ENCODE measurements at regions of chr12 and their contacts with region 1.

Region 1: DNA sequence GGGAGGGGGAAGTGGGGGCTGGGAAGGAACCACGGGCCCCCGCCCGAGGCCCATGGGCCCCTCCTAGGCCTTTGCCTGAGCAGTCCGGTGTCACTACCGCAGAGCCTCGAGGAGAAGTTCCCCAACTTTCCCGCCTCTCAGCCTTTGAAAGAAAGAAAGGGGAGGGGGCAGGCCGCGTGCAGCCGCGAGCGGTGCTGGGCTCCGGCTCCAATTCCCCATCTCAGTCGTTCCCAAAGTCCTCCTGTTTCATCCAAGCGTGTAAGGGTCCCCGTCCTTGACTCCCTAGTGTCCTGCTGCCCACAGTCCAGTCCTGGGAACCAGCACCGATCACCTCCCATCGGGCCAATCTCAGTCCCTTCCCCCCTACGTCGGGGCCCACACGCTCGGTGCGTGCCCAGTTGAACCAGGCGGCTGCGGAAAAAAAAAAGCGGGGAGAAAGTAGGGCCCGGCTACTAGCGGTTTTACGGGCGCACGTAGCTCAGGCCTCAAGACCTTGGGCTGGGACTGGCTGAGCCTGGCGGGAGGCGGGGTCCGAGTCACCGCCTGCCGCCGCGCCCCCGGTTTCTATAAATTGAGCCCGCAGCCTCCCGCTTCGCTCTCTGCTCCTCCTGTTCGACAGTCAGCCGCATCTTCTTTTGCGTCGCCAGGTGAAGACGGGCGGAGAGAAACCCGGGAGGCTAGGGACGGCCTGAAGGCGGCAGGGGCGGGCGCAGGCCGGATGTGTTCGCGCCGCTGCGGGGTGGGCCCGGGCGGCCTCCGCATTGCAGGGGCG is at the start of gene GAPDH:
- DNase-seq: peak; percentile 89 to 90 (median 90)
- H3K4me3 ChIP-seq: peak within 1 kb of the TSS; percentile 75 to 96 (median 95)
- H3K4me3 Mint-ChIP-seq: peak within 1 kb of the TSS; percentile 94 to 98
- H3K27ac ChIP-seq: peak within 1 kb of the TSS; percentile 94 to 96
- H3K27ac Mint-ChIP-seq: peak within 1 kb of the TSS; percentile 95 to 99 (median 98)
- H3K4me1 ChIP-seq: peaks cover 52 to 61% of the 10 kb centered on the region in 2 donors
- H3K4me1 Mint-ChIP-seq: peaks cover 53% of the 10 kb centered on the region
- H3K27me3 ChIP-seq: no peaks in the 10 kb centered on the region
- H3K27me3 Mint-ChIP-seq: peaks cover 0 to 5% (median 2%) of the 10 kb centered on the region in 3 donors
- CTCF ChIP-seq: no peak
- polyA plus RNA-seq, gene GAPDH: 2,879 to 3,427 (median 3,223) TPM

Region 2: DNA sequence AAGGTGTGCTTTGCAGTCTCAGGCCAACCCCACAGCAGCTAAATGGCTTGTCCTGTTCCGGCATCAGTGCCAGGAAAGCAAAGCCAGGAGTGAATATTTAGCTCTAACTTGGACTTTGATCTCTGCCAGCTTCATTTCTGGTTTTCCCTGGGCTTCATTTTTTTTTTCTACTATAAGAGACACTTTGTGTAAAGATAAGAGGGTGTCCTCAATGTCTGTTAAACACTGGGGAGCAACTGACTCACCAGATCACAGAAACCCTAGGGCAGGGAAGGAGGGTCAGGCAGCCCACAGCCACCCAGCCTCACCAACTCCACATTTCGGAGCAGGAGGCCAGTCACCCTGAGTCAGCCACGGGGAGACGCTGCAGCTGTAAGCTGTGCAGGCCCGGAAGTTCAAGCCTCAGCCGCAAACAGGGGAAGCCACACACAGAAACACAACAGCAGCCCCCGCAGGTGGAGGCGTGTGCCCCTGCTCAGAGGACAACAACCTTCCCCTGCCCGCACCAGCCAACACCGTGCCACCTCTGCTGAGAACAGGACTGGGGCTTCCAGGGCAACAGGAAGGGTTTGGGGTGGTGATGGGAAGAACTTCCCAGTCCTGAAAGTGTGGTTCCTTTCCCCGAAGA is 198.5 kb before region 1 on chr12:
- intact Hi-C with region 1: loop called (anchors 5 to 10 kb)
- DNase-seq: peak; percentile 77 to 88 (median 80)
- H3K4me3 ChIP-seq: peak overlapping the region; percentile 49 to 95 (median 90)
- H3K4me3 Mint-ChIP-seq: no peak overlapping the region
- H3K27ac ChIP-seq: peak overlapping the region; percentile 79 to 93
- H3K27ac Mint-ChIP-seq: no peak overlapping the region
- H3K4me1 ChIP-seq: peaks cover 90 to 97% of the 10 kb centered on the region in 2 donors
- H3K4me1 Mint-ChIP-seq: peaks cover 49% of the 10 kb centered on the region
- H3K27me3 ChIP-seq: no peaks in the 10 kb centered on the region
- H3K27me3 Mint-ChIP-seq: peaks cover 0 to 1% (median 0%) of the 10 kb centered on the region in 3 donors
- CTCF ChIP-seq: peak; percentile 58

Region 3: DNA sequence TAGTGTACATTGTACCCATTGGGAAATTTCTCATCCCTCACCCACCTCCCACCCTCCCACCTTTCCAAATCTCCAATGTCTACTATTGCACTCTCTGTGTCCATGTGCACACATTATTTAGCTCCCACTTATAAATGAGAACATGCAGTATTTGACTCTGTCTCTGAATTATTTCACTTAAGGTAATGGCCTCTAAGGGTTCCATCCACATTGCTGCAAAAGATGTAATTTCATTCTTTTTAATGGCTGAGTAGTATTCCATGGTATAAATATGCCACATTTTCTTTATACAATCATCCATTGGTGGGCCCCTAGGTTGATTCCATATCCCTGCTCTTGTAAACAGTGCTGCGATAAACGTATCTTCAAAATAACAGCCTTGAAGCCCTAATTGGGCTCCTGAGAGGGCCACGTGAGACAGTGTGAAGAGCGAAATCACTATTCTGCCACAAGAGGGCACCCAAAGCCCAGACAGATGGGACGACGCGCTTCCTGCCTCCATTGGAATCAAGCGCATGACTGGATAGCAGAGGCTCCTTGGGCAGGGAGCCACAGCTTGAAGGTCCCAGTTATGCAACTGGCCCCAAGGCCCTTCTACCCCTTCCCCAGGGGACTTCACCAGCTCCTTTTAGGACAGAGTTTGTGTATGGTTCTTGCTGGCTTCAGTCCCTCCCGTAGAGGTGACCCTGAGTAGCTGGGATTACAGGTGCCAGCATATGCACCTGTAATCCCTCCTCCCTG is 110.7 kb before region 1 on chr12:
- intact Hi-C with region 1: loop called in 1 of 2 experiments (anchors 2 kb)
- DNase-seq: peak; percentile 90 to 94 (median 93)
- H3K4me3 ChIP-seq: no peak overlapping the region
- H3K4me3 Mint-ChIP-seq: no peak overlapping the region
- H3K27ac ChIP-seq: peak overlapping the region in 1 of 2 donors; percentile 15
- H3K27ac Mint-ChIP-seq: peak overlapping the region in 4 of 7 donors; percentile 7 to 52 (median 26)
- H3K4me1 ChIP-seq: peaks cover 20 to 29% of the 10 kb centered on the region in 2 donors
- H3K4me1 Mint-ChIP-seq: peaks cover 22% of the 10 kb centered on the region
- H3K27me3 ChIP-seq: no peaks in the 10 kb centered on the region
- H3K27me3 Mint-ChIP-seq: peaks cover 0 to 4% (median 0%) of the 10 kb centered on the region in 3 donors
- CTCF ChIP-seq: peak; percentile 85

Region 4: GRCh38 chr12:6470375-6471163 is 63.5 kb before region 1 on chr12 and contains the start of gene VAMP1:
- intact Hi-C with region 1: loop called (anchors 2 kb)
- DNase-seq: peak; percentile 93
- H3K4me3 ChIP-seq: peak within 1 kb of the TSS; percentile 52 to 88 (median 86)
- H3K4me3 Mint-ChIP-seq: peak within 1 kb of the TSS; percentile 84 to 90
- H3K27ac ChIP-seq: peak within 1 kb of the TSS; percentile 77 to 83
- H3K27ac Mint-ChIP-seq: peak within 1 kb of the TSS; percentile 92 to 98 (median 95)
- H3K4me1 ChIP-seq: peaks cover 19 to 35% of the 10 kb centered on the region in 2 donors
- H3K4me1 Mint-ChIP-seq: peaks cover 41% of the 10 kb centered on the region
- H3K27me3 ChIP-seq: no peaks in the 10 kb centered on the region
- H3K27me3 Mint-ChIP-seq: peaks cover 0 to 2% (median 1%) of the 10 kb centered on the region in 3 donors
- CTCF ChIP-seq: no peak
- polyA plus RNA-seq, gene VAMP1: 0.84 to 24.6 (median 0.85) TPM

Region 5: GRCh38 chr12:6493497-6494257 is 40.4 kb before region 1 on chr12 and contains the start of gene NCAPD2:
- intact Hi-C with region 1: loop called (anchors 2 to 5 kb)
- DNase-seq: peak; percentile 91 to 95 (median 91)
- H3K4me3 ChIP-seq: peak within 1 kb of the TSS; percentile 61 to 92 (median 90)
- H3K4me3 Mint-ChIP-seq: peak within 1 kb of the TSS; percentile 97 to 98
- H3K27ac ChIP-seq: peak within 1 kb of the TSS; percentile 88 to 91
- H3K27ac Mint-ChIP-seq: peak within 1 kb of the TSS; percentile 95 to 99 (median 99)
- H3K4me1 ChIP-seq: peaks cover 20 to 30% of the 10 kb centered on the region in 2 donors
- H3K4me1 Mint-ChIP-seq: peaks cover 22% of the 10 kb centered on the region
- H3K27me3 ChIP-seq: no peaks in the 10 kb centered on the region
- H3K27me3 Mint-ChIP-seq: peaks cover 0 to 3% (median 2%) of the 10 kb centered on the region in 3 donors
- CTCF ChIP-seq: peak; percentile 19
- polyA plus RNA-seq, gene NCAPD2: 6.2 to 15.0 (median 8.3) TPM

Region 6: GRCh38 chr12:6547987-6548386 is 13.9 kb after region 1 on chr12:
- intact Hi-C with region 1: loop called in 1 of 2 experiments (anchors 2 kb)
- DNase-seq: no peak
- H3K4me3 ChIP-seq: peak overlapping the region in 2 of 3 experiments; percentile 38 to 97
- H3K4me3 Mint-ChIP-seq: peak overlapping the region; percentile 66 to 90
- H3K27ac ChIP-seq: peak overlapping the region; percentile 86 to 91
- H3K27ac Mint-ChIP-seq: peak overlapping the region; percentile 80 to 98 (median 94)
- H3K4me1 ChIP-seq: peaks cover 57 to 59% of the 10 kb centered on the region in 2 donors
- H3K4me1 Mint-ChIP-seq: peaks cover 61% of the 10 kb centered on the region
- H3K27me3 ChIP-seq: no peaks in the 10 kb centered on the region
- H3K27me3 Mint-ChIP-seq: peaks cover 0 to 1% (median 0%) of the 10 kb centered on the region in 3 donors
- CTCF ChIP-seq: no peak

Region 7: DNA sequence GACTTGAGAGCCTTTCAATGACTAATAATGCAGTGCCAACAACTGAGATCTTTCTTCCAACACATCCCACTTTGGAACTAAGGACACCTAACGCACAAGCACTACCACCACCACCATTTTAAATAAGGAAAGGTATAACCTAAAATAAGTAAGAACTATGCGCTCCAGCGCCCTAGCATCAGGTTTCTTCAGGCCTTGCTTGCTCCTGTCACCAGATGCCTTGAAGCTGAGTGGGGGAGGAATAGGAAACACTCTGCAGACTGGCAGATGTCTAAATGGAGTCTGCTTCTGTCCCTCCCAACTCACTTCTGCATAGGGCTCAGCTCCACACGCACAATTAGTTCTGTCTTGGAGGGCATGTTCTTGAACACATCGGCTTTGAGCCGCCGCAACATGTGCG is 58.0 kb after region 1 on chr12:
- intact Hi-C with region 1: no loop called
- DNase-seq: no peak
- H3K4me3 ChIP-seq: no peak overlapping the region
- H3K4me3 Mint-ChIP-seq: no peak overlapping the region
- H3K27ac ChIP-seq: no peak overlapping the region
- H3K27ac Mint-ChIP-seq: peak overlapping the region in 2 of 7 donors; percentile 12 to 36
- H3K4me1 ChIP-seq: no peaks in the 10 kb centered on the region
- H3K4me1 Mint-ChIP-seq: no peaks in the 10 kb centered on the region
- H3K27me3 ChIP-seq: no peaks in the 10 kb centered on the region
- H3K27me3 Mint-ChIP-seq: no peaks in the 10 kb centered on the region
- CTCF ChIP-seq: no peak

Region 8: GRCh38 chr12:6953442-6954315 is 419.6 kb after region 1 on chr12:
- intact Hi-C with region 1: loop called in 1 of 2 experiments (anchors 10 kb)
- DNase-seq: peak; percentile 86 to 89 (median 89)
- H3K4me3 ChIP-seq: peak overlapping the region; percentile 61 to 99 (median 98)
- H3K4me3 Mint-ChIP-seq: peak overlapping the region; percentile 97 to 99
- H3K27ac ChIP-seq: peak overlapping the region; percentile 87 to 95
- H3K27ac Mint-ChIP-seq: peak overlapping the region; percentile 93 to 98 (median 96)
- H3K4me1 ChIP-seq: peaks cover 77 to 84% of the 10 kb centered on the region in 2 donors
- H3K4me1 Mint-ChIP-seq: peaks cover 73% of the 10 kb centered on the region
- H3K27me3 ChIP-seq: no peaks in the 10 kb centered on the region
- H3K27me3 Mint-ChIP-seq: peaks cover 0 to 3% (median 0%) of the 10 kb centered on the region in 3 donors
- CTCF ChIP-seq: no peak